Dorsolateral prefrontal cortex (tissue), 120 donors: ENCODE measurements at regions of chr2 and their contacts with region 1.

Region 1: DNA sequence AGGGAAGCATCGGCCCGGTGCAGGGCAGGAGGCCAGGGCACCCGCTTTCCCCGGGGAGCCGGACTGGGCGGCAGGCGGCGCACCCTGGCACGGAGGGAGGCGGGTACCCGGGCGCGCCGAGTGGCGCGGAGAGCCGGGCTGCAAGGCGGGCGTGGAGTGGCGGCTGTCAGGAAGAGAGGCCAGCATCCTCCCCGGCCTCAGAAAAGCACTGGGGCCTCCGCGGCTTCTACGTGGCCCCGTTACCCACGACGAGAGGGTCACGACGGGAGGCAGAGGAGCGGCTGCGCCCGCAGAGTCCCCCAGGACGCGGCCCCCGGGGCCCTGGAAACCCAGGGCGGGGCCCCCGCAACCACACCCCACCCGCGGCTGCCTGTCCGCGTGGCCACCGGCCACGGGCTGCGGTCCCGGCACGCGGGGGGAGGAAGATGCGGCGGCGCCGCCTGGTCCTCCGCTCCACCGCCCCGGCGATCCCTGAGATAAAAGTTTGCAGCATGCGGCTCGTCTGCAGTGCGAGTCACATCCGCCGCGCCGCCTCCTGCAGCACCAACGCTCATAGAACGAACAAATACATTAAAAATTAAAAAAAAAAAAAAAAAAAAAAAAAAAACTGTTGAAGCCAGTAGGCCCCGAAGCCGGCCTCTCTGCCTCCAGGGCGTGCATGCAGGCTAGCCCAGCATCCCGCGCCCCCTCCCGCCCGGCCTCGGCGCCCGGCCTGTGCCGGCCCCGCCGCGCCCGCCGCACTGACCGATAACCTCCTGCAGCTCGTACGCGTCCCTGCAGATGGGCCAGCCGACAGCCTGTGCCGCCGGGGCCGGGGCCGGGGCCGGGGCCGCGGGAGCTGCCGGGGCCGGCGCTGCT is 683 bp downstream of the STK39 start:
- DNase-seq: peak; percentile 58 to 88 (median 76)
- H3K4me3 ChIP-seq: peak overlapping the region; percentile 53 to 89 (median 78)
- H3K27ac ChIP-seq: peak overlapping the region in 58 of 59 donors; percentile 67 to 95 (median 90)
- H3K27me3 ChIP-seq: no peaks in the 10 kb centered on the region
- CTCF ChIP-seq: peak in 52 of 56 donors; percentile 18 to 75 (median 52)

Region 2: GRCh38 chr2:167292430-167293171 is 954.1 kb before region 1 on chr2:
- intact Hi-C with region 1: loop called (anchors 5 to 10 kb)
- DNase-seq: peak; percentile 72 to 95 (median 88)
- H3K4me3 ChIP-seq: peak within 1 kb of the TSS; percentile 65 to 94 (median 83)
- H3K27ac ChIP-seq: peak within 1 kb of the TSS; percentile 78 to 99 (median 97)
- H3K27me3 ChIP-seq: no peaks in the 10 kb centered on the region
- CTCF ChIP-seq: peak in 53 of 56 donors; percentile 2 to 68 (median 43)

Region 3: GRCh38 chr2:168006498-168006897 is 240.2 kb before region 1 on chr2:
- intact Hi-C with region 1: no loop called
- DNase-seq: no peak
- H3K4me3 ChIP-seq: no peak overlapping the region
- H3K27ac ChIP-seq: peak overlapping the region in 2 of 59 donors; percentile 4 to 6
- H3K27me3 ChIP-seq: no peaks in the 10 kb centered on the region
- CTCF ChIP-seq: no peak

Region 4: GRCh38 chr2:168136392-168136977 is 110.2 kb before region 1 on chr2:
- intact Hi-C with region 1: loop called (anchors 2 to 5 kb)
- DNase-seq: no peak
- H3K4me3 ChIP-seq: no peak overlapping the region
- H3K27ac ChIP-seq: peak overlapping the region in 1 of 59 donors; percentile 1
- H3K27me3 ChIP-seq: no peaks in the 10 kb centered on the region
- CTCF ChIP-seq: peak; percentile 38 to 84 (median 66)

Region 5: GRCh38 chr2:168184681-168185513 is 61.8 kb before region 1 on chr2:
- intact Hi-C with region 1: loop called (anchors 5 to 10 kb)
- DNase-seq: no peak
- H3K4me3 ChIP-seq: no peak overlapping the region
- H3K27ac ChIP-seq: peak overlapping the region in 43 of 59 donors; percentile 7 to 84 (median 58)
- H3K27me3 ChIP-seq: no peaks in the 10 kb centered on the region
- CTCF ChIP-seq: no peak

Region 6: GRCh38 chr2:168189835-168190569 is 56.7 kb before region 1 on chr2:
- intact Hi-C with region 1: loop called in 1 of 2 experiments (anchors 10 kb)
- DNase-seq: no peak
- H3K4me3 ChIP-seq: no peak overlapping the region
- H3K27ac ChIP-seq: peak overlapping the region in 5 of 59 donors; percentile 6 to 57 (median 24)
- H3K27me3 ChIP-seq: no peaks in the 10 kb centered on the region
- CTCF ChIP-seq: no peak

Region 7: DNA sequence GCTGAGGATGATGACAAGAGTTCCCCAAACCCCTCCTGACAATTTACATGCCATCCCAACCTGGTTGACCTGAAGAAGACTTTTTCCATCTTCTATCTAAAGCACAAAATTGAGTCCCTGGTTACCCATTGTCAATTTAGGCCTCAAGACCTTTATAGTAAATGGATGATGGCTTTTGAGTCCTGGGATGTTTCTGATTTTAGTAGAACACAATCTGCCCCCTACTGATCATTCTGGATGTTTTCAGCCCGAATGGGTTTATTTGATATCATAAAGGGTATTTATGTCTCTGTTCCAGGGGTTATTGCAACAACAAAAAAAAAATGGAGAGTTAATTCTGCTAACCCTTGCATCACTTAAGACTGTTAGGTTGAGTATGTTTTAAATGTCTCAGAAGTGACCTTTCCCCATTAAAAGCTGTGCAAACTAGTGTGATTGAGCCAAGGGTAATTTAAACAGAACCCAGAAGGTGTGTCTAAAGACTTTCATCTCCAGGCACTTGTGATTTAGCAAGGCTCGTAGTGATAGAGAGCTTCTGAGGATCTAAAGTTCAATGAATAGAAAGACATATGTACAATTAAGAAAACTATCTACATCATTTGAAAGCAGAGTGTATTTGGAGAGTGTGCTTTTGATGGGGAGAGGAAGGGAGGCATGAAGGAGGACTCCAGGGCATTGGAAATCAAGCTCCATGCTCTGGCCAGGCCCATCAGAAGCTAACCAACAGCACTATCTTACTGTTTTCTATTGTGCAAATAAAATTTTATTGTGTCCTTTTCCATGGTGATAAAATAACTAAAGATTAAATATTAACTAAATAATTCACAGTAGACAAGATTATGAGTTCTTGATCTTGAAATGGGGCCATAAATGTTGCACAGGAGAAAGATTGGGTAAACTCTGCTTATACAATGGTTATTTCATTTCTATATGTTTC is 459.1 kb after region 1 on chr2:
- intact Hi-C with region 1: loop called in 1 of 2 experiments (anchors 10 kb)
- DNase-seq: no peak
- H3K4me3 ChIP-seq: no peak overlapping the region
- H3K27ac ChIP-seq: no peak overlapping the region
- H3K27me3 ChIP-seq: no peaks in the 10 kb centered on the region
- CTCF ChIP-seq: peak in 54 of 56 donors; percentile 26 to 73 (median 49)